HEK293T (cell line): ENCODE measurements at regions of chr1 and their contacts with region 1.

Region 1: GRCh38 chr1:228405987-228406265 is 709 bp downstream of the TRIM11 start:
- DNase-seq: no peak

Region 2: DNA sequence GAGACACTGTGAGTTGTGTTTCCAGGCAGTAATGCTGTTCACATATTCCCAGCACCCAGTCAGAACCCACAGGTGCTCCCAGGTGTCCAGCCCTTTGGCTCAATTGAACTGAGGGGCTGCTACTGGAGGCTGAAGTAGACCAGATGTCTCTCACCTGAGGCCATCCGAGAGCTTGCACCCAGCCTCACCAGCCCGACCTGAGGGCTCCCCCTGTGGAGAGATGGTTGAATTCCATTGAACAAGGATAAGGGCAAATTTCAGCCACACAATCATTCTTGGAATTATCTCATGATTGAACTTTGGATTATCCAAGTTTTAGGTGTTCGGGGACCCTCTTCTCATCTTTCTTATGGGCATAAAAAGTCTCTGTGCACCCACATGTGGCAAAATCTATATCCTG is 146.0 kb before region 1 on chr1:
- CTCF ChIA-PET with region 1: no interaction called
- POLR2A ChIA-PET with region 1: no interaction called
- DNase-seq: peak; percentile 16

Region 3: GRCh38 chr1:228457396-228458176 is 51.7 kb after region 1 on chr1:
- CTCF ChIA-PET with region 1: no interaction called
- POLR2A ChIA-PET with region 1: interaction called, 33 read pairs
- DNase-seq: peak; percentile 98